ENCODE measurements at regions of chr1 and their contacts with region 1.

Region 1: GRCh38 chr1:215282557-215282956 is 200.0 kb downstream of the KCNK2 start:
- DNase-seq: no peak
- H3K4me3 ChIP-seq: no peak overlapping the region
- H3K27ac ChIP-seq: no peak overlapping the region
- H3K4me1 ChIP-seq: no peaks in the 10 kb centered on the region
- H3K27me3 ChIP-seq: no peaks in the 10 kb centered on the region
- CTCF ChIP-seq: no peak
- POLR2A ChIP-seq: no peak

Region 2: DNA sequence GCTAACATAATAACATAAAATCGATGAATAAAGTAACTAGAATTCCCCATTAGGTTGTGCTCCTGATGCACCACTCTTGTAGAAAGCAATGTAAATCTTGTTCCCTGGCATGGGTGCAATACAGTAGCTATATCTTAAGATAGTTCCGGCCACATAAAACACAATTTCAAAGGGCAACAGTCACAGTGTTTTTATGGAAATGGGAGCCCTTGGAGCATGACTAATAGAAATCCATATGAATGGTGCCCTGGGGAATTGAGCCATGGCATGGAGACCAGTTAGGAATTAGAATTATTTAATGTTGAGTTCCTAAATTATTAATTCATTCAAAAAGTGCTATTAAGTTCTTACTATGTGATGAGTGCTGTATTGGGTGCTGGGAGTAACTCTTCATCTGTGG is 81.3 kb before region 1 on chr1:
- intact Hi-C with region 1: loop called (anchors 5 kb)
- DNase-seq: no peak
- H3K4me3 ChIP-seq: no peak overlapping the region
- H3K27ac ChIP-seq: no peak overlapping the region
- H3K4me1 ChIP-seq: no peaks in the 10 kb centered on the region
- H3K27me3 ChIP-seq: no peaks in the 10 kb centered on the region
- CTCF ChIP-seq: no peak
- POLR2A ChIP-seq: no peak

Region 3: DNA sequence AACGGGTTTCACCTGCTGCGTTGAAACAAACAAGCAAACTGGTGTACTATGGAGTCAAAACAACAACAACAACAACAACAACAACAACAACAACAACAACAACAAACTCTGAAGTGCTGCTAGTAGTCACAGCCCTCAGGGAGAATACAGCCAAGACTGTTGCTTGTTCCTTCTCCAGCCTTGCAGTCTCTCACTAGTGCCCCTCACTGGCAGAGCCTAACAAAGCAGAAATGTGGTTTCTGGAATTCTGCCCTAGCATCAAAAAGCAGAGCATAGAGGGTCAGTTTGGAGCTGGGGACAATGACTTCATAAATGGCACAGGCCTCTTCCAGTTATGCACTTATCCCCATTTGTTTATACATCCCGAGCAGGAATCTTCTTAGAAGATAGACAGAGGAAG is 12.6 kb before region 1 on chr1:
- intact Hi-C with region 1: no loop called
- DNase-seq: no peak
- H3K4me3 ChIP-seq: no peak overlapping the region
- H3K27ac ChIP-seq: no peak overlapping the region
- H3K4me1 ChIP-seq: no peaks in the 10 kb centered on the region
- H3K27me3 ChIP-seq: no peaks in the 10 kb centered on the region
- CTCF ChIP-seq: no peak
- POLR2A ChIP-seq: no peak

Measured in breast epithelium (tissue), 4 donors.